ENCODE measurements at regions of chr4 and their contacts with region 1.

Region 1: DNA sequence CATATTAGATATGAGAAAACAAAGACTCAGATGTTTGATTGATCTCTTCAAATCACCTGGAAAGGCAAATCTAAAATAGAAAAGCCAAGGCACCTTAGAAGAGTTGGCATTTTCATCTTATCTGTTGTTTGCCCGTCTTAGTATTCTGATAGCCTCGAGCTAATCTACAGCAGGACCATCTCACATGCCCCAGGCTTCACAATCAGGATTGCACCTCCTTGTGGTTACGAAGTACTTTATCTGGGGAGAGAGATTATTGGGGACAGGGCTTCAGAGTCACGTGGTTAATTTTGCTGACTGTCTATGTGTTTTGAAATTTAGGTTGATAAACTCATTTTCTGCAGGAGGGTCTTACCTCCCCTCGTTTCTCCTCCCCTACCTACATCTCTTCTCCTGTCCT is 313.1 kb upstream of the ANXA10 start:
- DNase-seq: no peak
- ATAC-seq: no peak
- H3K4me3 ChIP-seq: no peak overlapping the region; the same call in 1 of the 2 replicates
- H3K27ac ChIP-seq: no peak overlapping the region
- H3K4me1 ChIP-seq: peaks cover 11% of the 10 kb centered on the region; the same call in 1 of the 2 replicates
- H3K27me3 ChIP-seq: no peaks in the 10 kb centered on the region
- CTCF ChIP-seq: peak; percentile 19; the same call in 1 of the 2 replicates

Region 2: DNA sequence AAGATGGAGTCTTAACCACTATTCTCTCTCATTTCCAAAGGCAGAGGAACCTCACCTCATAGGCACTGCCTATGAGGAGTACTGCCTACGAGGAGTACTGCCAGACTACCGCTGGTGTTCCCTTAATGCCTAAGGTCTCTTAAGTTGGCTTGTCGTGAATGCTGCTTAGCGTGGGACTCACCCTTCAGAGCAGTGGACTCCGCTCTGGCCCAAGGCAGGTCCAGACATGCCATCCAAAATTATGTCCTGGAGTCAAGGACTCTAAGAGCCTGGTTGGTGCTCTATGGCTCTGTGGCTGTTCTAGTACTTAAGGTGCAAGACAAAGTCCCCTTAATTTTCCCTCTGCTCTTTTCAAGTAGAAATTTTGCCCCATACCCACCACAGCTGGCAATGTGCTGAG is 252.6 kb before region 1 on chr4:
- CTCF ChIA-PET with region 1: no interaction called
- POLR2A ChIA-PET with region 1: no interaction called
- intact Hi-C with region 1: no loop called
- DNase-seq: no peak
- ATAC-seq: no peak
- H3K4me3 ChIP-seq: no peak overlapping the region
- H3K27ac ChIP-seq: no peak overlapping the region
- H3K4me1 ChIP-seq: no peaks in the 10 kb centered on the region
- H3K27me3 ChIP-seq: no peaks in the 10 kb centered on the region
- CTCF ChIP-seq: no peak

Region 3: DNA sequence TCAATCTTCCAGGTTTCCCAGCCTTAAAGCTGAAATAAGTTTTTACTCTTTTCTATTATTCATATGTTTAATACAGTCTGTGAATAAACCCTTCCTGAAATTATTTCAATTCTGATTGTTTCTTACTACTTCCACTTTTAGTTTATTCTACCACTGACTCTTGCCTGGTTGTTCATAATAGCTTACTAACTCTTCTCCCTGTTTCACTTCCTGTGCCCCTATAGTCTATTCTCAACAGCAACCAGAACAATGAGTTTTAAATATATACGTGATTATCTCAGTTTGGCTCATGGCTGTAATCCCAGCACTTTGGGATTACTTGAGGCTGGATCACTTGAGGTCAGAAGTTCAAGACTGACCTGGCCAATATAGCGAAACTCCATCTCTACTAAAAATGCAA is 137.0 kb before region 1 on chr4:
- CTCF ChIA-PET with region 1: no interaction called
- POLR2A ChIA-PET with region 1: no interaction called
- intact Hi-C with region 1: loop called (anchors 10 kb)
- DNase-seq: no peak
- ATAC-seq: no peak
- H3K4me3 ChIP-seq: no peak overlapping the region
- H3K27ac ChIP-seq: no peak overlapping the region
- H3K4me1 ChIP-seq: no peaks in the 10 kb centered on the region
- H3K27me3 ChIP-seq: no peaks in the 10 kb centered on the region
- CTCF ChIP-seq: no peak